ENCODE measurements at regions of chr1 and their contacts with region 1.

Region 1: DNA sequence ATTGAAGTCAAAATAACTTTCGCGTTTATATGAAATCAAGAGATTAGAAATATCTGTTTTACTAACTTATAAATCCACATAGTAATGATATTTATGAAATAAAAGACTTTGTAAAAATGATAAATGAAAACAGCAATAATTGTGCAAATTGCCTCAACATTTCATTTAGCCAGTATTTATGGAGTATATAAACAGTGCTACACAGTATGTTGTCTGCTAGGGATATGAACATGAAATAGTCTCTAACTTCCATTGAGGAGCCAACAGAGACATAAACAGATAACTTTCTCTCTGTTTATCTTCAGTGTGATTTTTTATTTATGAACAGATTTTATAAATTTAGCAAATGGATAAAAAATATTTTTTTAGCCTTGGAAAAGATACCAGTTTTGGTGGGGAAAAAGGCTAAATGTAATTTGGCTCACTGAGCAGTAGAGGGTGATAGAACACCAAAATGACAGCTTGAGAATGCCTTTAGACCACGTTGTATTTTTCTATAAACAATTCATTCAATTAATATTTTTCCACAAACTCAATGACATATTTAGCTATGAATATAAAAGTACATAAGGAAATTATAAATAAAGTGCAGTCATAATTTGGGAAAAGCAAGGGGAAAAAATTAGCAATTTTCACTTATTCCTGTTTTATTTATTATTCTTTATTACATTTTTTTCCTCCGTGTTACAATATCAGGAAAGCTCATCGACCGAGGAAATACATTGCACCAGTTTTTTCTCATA is 47.5 kb upstream of the EEIG2 start:
- DNase-seq: no peak

Region 2: DNA sequence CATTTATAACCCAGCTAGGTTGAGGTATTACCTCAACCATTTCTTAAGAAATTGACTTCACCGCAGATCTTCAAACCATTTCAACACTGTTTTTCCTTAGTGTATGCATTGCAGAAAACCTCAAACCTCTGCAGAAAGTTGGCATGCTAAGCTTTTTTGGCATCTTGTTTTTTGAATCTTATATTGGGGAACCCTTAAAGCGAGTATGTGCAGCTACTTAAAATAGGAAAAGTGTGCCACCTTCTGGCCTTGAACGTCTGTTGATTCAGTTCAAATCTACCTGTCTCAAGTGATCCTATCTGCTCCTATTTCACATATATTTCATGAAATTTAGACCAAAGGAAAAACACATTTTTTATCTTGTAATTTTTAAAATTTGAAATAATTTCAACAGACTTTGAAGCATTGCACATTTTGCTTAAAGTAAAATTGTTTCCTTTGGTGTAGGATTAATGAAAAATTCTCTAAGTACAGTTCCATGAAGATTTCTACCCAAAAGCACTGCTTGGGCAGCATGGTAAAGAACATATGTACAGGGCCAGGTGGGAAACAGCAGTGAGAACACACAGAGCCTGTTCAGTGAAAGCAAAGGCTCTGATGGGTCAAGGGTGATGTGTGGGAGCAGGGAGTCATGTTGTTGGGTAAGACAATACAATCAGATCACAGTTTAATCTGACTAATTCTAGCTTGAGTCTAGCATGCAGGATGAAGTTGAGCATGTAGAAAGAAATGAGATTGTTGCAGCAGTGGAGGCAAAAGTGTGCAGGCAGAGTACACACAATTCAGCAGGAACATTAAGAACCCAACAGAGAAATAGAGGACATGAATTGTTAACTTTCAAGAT is 131.3 kb after region 1 on chr1:
- intact Hi-C with region 1: loop called (anchors 1 kb)
- DNase-seq: no peak